ENCODE measurements at regions of chr19 and their contacts with region 1.

Region 1: GRCh38 chr19:18521885-18522624 is at the start of gene ELL:
- DNase-seq: peak; percentile 100
- H3K4me3 Mint-ChIP-seq: peak within 1 kb of the TSS; percentile 98
- H3K27ac Mint-ChIP-seq: peak within 1 kb of the TSS; percentile 89
- H3K4me1 Mint-ChIP-seq: peaks cover 26% of the 10 kb centered on the region
- H3K27me3 Mint-ChIP-seq: no peaks in the 10 kb centered on the region

Region 2: DNA sequence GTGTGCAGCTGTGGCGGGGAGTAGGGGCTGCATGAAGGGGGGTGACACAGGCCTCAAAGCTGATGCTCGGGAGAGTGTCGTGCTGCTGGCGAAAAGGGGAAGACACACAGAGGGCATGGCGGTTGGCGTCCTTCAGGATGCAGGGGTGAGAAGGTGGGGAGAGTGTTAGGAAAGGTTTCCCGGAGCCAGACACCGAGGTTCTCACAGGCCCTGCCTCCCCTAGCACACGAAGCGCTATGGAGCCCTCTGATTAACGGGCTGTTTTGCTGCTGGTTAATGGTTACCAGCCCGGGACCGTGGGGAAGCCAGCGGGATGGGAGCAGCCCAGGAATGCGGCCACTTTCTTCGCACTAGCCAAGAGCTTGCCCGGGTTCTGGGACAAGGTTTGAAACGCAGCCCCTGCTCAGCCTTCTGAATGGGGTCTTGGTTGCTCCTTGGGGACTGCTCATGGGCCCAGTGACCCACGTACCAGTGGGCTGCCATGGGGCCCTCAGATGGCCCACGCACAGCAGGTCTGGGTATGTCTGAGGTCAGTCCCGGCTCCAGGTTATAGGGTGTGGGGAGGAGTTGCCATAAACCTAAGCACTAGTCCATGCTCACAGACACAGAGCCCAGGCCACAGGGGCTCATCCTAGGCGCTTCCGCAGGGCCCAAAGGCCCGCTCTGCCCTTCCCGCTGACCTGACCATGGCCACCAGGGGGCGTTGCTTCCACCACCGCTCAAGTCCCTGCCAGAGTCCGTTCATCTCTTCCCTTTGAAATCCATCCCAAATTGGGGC is 52.8 kb before region 1 on chr19:
- CTCF ChIA-PET with region 1: interaction called, 17 read pairs
- DNase-seq: peak; percentile 68
- H3K4me3 Mint-ChIP-seq: no peak overlapping the region
- H3K27ac Mint-ChIP-seq: peak overlapping the region; percentile 55
- H3K4me1 Mint-ChIP-seq: peaks cover 6% of the 10 kb centered on the region
- H3K27me3 Mint-ChIP-seq: no peaks in the 10 kb centered on the region

Region 3: DNA sequence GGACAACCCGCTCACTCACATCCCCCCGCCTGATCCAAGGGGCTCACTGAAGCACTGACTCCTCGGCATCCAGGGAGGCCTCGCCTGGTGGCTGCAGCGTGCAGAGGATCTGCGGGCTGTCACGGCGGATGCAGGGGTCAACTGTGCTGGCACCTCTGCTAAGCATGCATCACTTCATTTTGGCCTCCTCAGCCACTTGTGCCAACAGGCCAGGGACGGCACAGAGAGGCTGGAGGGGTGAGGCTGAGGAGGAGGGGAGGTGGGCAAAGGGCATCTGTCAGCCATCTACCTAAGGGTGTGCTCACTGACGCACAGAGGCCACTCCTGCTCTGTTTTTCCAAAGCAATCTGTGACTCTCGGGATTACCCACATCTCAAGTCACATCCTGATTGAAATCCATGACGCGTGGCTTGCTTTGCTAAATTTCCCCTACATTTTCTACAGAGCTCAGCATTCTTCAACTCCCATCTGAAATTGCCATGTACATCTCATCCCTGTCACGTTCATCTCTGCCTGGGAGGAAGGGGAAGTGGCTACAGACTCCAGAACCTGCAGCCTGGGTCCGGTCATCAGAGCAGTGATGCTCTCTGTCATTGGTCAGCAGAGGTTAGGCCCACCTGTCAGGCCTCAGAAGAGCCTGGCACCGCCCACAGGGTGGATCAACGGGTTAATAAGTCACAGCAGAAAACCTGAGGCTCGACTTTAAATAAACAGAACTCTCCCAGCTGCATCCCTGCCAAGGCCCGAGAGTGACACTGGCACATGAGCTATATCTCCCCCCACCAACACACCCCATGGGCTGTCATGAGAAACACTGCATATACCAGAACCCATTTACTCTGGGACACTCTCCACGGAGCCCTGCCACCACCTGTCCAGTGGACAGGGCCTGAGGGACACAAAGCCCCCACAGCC is 17.8 kb before region 1 on chr19:
- CTCF ChIA-PET with region 1: interaction called, 20 read pairs
- DNase-seq: no peak
- H3K4me3 Mint-ChIP-seq: no peak overlapping the region
- H3K27ac Mint-ChIP-seq: no peak overlapping the region
- H3K4me1 Mint-ChIP-seq: peaks cover 75% of the 10 kb centered on the region
- H3K27me3 Mint-ChIP-seq: no peaks in the 10 kb centered on the region

Region 4: GRCh38 chr19:18571564-18572300 is 49.7 kb after region 1 on chr19 and contains the start of gene UBA52:
- CTCF ChIA-PET with region 1: interaction called, 24 read pairs
- DNase-seq: peak; percentile 99
- H3K4me3 Mint-ChIP-seq: peak within 1 kb of the TSS; percentile 81
- H3K27ac Mint-ChIP-seq: peak within 1 kb of the TSS; percentile 98
- H3K4me1 Mint-ChIP-seq: peaks cover 32% of the 10 kb centered on the region
- H3K27me3 Mint-ChIP-seq: no peaks in the 10 kb centered on the region

Region 5: DNA sequence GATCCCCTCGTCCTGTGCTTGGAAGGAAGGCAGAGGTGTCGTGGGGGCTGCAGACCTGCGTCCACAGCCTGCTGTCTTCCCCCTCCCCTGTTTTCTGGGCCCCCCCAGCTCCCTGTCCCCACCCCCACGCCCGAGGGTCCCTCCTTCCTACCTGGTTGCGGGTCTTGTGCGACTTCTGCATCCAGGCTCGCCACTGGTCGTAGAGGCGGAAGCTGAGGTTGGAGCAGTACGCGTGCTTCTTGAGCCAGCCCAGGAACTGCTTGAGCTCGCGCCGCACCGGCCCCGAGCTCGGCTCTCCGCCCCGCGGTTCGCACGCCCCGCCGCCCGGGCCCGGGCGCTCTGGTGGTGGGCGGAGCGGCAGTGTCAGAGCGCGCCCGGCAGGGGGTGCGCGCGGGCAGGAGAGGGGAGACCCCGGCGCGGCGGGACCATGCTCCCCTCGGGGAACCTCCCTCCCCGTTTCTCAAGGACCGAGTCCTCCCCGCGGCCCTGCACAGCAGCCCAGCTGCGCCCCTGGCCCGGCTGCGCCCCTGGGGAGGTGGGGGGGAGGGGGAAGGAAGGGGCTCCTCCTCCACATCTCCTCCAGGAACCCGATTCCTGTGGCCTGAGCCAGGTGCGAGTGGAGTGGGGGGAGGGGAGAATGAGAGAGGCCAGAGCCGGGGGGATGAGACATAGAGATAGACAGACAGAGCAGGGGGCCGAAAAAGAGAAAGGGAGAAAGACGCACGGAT is 72.2 kb after region 1 on chr19:
- CTCF ChIA-PET with region 1: interaction called, 32 read pairs
- DNase-seq: peak; percentile 81
- H3K4me3 Mint-ChIP-seq: peak overlapping the region; percentile 37
- H3K27ac Mint-ChIP-seq: no peak overlapping the region
- H3K4me1 Mint-ChIP-seq: peaks cover 25% of the 10 kb centered on the region
- H3K27me3 Mint-ChIP-seq: peaks cover 52% of the 10 kb centered on the region

Region 6: GRCh38 chr19:18629166-18630088 is 107.4 kb after region 1 on chr19:
- CTCF ChIA-PET with region 1: no interaction called
- DNase-seq: no peak
- H3K4me3 Mint-ChIP-seq: no peak overlapping the region
- H3K27ac Mint-ChIP-seq: no peak overlapping the region
- H3K4me1 Mint-ChIP-seq: no peaks in the 10 kb centered on the region
- H3K27me3 Mint-ChIP-seq: peaks cover 20% of the 10 kb centered on the region

Region 7: DNA sequence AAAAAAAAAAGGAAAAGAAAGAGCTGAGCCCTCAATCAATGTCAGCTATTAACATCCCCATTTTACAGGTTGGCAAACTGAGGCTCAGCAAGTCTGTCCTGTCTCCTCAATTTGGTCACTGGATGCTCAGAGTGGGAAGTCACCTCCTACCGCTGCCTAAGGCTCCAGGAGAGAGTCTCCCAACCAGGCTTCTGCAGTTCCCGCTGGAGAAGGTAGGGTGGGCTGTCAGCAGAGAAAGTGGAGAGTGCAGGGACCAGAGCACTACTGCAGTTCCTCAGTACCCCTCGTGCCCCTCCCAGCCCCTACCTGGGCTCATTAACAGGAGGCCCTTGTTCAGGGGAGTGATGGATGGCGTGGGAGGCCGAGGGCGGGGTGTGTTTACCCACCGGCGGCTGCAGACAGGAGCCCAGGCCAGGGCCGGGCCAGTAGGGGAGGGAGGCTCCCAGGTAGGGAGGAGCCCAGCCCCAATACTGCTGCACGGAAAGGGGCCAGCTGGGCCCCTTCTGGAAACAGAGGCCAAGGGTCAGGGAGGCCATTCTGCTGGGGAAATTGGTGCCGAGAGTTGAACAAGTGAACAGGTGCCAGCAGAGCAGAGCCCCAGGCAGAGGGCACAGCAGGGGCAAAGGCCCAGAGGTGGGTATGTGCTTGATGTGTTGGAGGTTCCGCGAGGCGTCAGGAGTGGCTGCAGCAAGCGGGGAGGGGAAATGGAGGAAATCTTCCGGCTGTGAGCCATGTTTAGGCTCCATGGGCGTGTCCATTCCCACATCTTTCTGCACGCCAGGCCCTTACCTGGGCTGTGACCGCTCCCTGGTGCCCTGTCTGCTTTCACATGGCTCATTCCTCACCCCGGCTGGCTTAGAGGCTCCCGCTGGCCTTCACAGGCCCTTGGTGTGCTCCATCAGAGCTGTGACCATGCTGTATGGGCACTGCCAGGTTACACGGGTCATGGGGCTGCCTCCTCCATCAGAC is 276.6 kb after region 1 on chr19:
- CTCF ChIA-PET with region 1: no interaction called
- DNase-seq: no peak
- H3K4me3 Mint-ChIP-seq: no peak overlapping the region
- H3K27ac Mint-ChIP-seq: no peak overlapping the region
- H3K4me1 Mint-ChIP-seq: no peaks in the 10 kb centered on the region
- H3K27me3 Mint-ChIP-seq: no peaks in the 10 kb centered on the region

Measured in activated naive CD4-positive, alpha-beta T cell treated with anti-CD3 and anti-CD28 coated beads, Interleukin-2, amount 10 ng/mL, durations not matched to agents 7 days and 5 days (primary cell).